Left colon (tissue), 2 donors: ENCODE measurements at regions of chr16 and their contacts with region 1.

Region 1: DNA sequence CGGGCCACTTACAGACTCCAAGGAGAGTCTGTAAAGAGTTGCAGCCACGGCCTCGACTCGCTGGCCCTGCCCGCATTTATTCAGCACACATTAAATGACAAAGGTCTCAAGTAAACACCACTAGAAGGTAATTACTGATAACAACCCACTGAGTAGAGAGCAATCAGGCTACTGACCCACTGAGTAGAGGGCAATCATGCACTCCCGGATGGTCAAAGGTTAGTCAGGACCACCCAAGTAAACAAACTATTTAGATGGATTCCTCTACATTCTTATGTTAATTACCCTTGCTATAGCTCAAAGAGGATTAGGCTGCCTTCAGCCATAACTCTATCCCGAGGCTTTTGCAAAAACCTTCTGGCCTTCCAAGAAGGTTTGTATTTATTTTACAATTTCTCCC is 30.7 kb upstream of the ZNF267 start:
- DNase-seq: no peak
- ATAC-seq: no peak

Region 2: GRCh38 chr16:31472709-31473203 is 370.1 kb before region 1 on chr16:
- intact Hi-C with region 1: no loop called
- DNase-seq: peak; percentile 89 to 95
- ATAC-seq: peak; percentile 48

Region 3: DNA sequence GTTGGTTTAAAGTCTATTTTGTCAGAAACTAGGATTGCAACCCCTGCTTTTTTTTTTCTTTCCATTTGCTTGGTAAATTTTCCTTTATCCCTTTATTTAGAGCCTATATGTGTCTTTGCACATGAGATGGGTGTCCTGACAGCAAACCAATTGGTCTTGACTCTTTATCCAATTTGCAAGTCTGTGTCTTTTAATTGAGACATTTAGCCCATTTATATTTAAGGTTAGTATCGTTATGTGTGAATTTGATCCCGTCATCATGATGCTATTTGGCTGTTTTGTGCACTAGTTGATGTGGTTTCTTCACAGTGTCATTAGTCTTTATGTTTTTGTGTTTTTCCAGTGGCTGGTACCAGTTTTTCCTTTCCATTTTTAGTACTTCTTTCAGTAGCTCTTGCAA is 97.0 kb before region 1 on chr16:
- intact Hi-C with region 1: loop called in 1 of 2 experiments (anchors 10 kb)
- DNase-seq: no peak
- ATAC-seq: no peak

Region 4: GRCh38 chr16:31767267-31767666 is 75.6 kb before region 1 on chr16:
- intact Hi-C with region 1: no loop called
- DNase-seq: no peak
- ATAC-seq: no peak

Region 5: GRCh38 chr16:31916056-31916488 is 73.2 kb after region 1 on chr16:
- intact Hi-C with region 1: loop called in 1 of 2 experiments (anchors 10 kb)
- DNase-seq: no peak
- ATAC-seq: no peak